Activated T-helper 1 cell treated with anti-CD3 and anti-CD28 coated beads, Interleukin-12 subunit alpha, Interleukin-12 subunit beta, Interleukin-2, Interleukin-4 antibody, amounts not matched to agents 30 ng/mL and 10 ng/mL and 1 ng/mL, durations not matched to agents 14 hours and 24 hours and 36 hours (primary cell): ENCODE measurements at regions of chr13 and their contacts with region 1.

Region 1: GRCh38 chr13:106917673-106918556 is 350.0 kb upstream of the ARGLU1 start:
- DNase-seq: peak; percentile 51
- H3K4me3 Mint-ChIP-seq: peak overlapping the region; percentile 78
- H3K27ac Mint-ChIP-seq: no peak overlapping the region
- H3K4me1 Mint-ChIP-seq: no peaks in the 10 kb centered on the region
- H3K27me3 Mint-ChIP-seq: peaks cover 21% of the 10 kb centered on the region

Region 2: DNA sequence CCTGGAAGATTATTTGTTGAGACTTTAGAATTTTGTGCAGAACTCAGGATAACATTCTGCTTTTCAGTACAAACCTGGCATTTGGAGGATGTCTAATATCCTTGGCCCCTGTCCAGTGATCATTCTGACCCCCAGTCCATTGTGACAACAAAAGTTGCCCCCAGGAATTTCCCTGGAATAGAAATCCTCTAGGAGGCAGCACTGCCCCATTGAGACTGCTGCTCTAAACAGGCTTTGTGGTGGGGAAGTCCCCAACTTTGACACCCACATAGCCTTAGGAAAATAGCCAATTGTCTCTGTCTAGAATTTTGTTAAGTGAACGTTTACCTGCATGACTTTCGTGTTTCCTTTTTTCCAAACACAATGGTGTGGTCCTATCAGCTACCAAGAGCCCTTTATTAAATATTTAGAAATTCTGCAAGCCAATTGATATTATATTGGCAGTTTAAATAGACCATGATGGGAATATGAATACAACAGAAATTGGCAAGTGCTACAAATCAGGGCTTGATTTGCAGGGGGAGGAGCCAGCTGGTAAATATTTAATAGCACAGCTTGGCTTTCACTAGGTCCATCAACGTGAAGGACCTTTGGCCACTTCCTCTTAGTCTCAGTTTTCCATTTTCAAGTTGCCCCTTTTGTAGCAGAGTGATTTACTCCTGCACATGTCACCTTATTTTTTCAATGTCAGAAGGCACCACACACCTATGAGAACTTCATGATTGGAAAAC is 834.1 kb before region 1 on chr13:
- intact Hi-C with region 1: loop called (anchors 2 kb)
- DNase-seq: no peak
- H3K4me3 Mint-ChIP-seq: no peak overlapping the region
- H3K27ac Mint-ChIP-seq: no peak overlapping the region
- H3K4me1 Mint-ChIP-seq: no peaks in the 10 kb centered on the region
- H3K27me3 Mint-ChIP-seq: no peaks in the 10 kb centered on the region

Region 3: DNA sequence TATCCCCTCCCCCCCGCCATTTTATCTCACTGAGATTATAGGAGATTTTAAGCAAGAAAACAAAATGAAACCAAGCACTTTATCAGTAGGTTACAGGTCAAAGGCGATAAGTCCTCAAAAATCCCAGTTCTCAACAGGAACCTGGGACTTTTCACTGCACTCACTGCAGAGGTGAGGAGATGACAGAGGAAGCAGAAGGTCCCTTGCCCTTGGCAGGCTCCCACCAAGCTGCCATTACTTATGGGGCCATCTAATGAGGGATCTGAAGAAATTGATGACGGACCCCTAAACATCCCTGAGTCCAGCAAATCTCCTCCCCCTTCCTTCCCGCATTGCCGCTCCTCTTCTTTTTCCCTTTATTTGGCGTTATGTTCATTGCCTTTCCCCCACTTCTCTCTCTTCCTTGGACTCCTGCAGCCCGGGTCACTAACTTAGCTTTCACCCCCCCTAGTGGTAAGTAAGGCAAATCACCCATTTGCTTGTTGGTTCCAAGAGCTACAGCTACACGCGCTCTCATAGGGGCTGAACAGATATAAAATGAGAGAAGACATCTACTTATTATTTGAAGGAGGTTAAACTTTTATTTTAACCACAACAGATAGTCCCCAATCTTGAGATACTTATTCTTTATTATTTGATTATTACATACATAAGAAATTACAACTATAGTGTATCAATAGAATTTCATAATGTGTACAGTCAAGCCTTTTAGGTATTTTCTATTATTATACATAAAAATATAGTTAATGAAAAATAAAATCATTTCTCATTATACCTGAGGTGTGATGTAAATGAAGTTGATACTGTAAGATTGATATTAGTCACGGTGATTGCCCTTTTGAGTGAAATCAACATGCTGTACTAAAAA is 298.0 kb before region 1 on chr13:
- intact Hi-C with region 1: loop called (anchors 10 kb)
- DNase-seq: no peak
- H3K4me3 Mint-ChIP-seq: no peak overlapping the region
- H3K27ac Mint-ChIP-seq: no peak overlapping the region
- H3K4me1 Mint-ChIP-seq: peaks cover 10% of the 10 kb centered on the region
- H3K27me3 Mint-ChIP-seq: peaks cover 8% of the 10 kb centered on the region

Region 4: DNA sequence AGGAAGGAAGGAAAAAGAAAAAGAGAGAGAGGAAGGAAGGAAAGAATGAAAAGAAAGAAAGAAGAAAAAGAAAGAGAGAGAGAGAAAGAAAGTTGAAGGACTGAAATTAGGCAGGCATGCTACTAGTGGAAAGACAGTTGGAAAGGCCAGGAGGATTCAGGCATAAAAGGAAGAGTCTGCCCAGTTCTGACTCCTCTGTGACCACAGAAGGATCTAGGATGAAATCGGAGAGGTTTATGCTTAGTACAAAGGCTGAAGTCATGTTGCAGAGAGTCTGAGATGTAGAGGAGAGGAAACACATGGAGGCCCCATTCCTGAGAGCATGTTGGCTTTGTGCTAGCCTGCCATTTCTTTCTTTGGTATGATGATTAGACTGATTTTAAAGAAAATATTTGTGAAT is 103.5 kb before region 1 on chr13:
- intact Hi-C with region 1: no loop called
- DNase-seq: no peak
- H3K4me3 Mint-ChIP-seq: no peak overlapping the region
- H3K27ac Mint-ChIP-seq: no peak overlapping the region
- H3K4me1 Mint-ChIP-seq: no peaks in the 10 kb centered on the region
- H3K27me3 Mint-ChIP-seq: peaks cover 2% of the 10 kb centered on the region

Region 5: GRCh38 chr13:107928762-107929161 is 1010.8 kb after region 1 on chr13:
- intact Hi-C with region 1: no loop called
- DNase-seq: no peak
- H3K4me3 Mint-ChIP-seq: no peak overlapping the region
- H3K27ac Mint-ChIP-seq: no peak overlapping the region
- H3K4me1 Mint-ChIP-seq: no peaks in the 10 kb centered on the region
- H3K27me3 Mint-ChIP-seq: no peaks in the 10 kb centered on the region